ENCODE measurements at regions of chr14 and their contacts with region 1.

Region 1: DNA sequence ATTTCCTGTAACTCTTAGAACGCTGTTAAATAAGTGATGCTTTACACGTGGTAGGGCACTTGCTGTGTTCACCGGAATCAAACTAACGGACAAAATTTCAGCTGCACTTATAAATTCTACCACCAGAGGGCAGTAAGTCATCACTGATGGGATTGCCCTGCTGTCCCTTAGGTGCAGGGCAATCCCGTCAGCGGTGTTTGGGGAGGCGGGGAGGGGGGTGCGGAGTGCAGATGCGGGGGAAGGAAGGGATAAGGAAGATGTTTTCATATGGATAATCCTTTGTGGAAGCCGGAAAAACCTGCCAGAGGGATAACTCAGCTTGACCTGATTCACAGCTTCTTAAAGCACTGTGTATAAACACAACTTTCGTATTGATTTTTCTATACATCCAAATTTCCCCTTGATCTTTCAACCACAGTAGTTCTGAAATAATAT is 21.7 kb upstream of the SLC10A1 start:
- DNase-seq: peak; percentile 72
- H3K4me3 ChIP-seq: no peak overlapping the region
- H3K27ac ChIP-seq: no peak overlapping the region
- H3K4me1 ChIP-seq: no peaks in the 10 kb centered on the region
- H3K27me3 ChIP-seq: no peaks in the 10 kb centered on the region
- CTCF ChIP-seq: peak; percentile 90 to 96 (median 95)
- POLR2A ChIP-seq: no peak

Region 2: GRCh38 chr14:70027785-70028428 is 209.1 kb after region 1 on chr14:
- intact Hi-C with region 1: loop called (anchors 5 kb)
- DNase-seq: peak; percentile 82
- H3K4me3 ChIP-seq: no peak overlapping the region
- H3K27ac ChIP-seq: no peak overlapping the region
- H3K4me1 ChIP-seq: no peaks in the 10 kb centered on the region
- H3K27me3 ChIP-seq: no peaks in the 10 kb centered on the region
- CTCF ChIP-seq: peak; percentile 81 to 89 (median 81)
- POLR2A ChIP-seq: no peak

Measured in testis (tissue), 5 donors.